Panc1 (cell line): ENCODE measurements at regions of chr6 and their contacts with region 1.

Region 1: GRCh38 chr6:74870403-74870802 is 335.4 kb downstream of the COL12A1 start:
- DNase-seq: no peak
- ATAC-seq: no peak
- H3K4me3 ChIP-seq: no peak overlapping the region
- H3K27ac ChIP-seq: no peak overlapping the region
- H3K4me1 ChIP-seq: no peaks in the 10 kb centered on the region
- H3K27me3 ChIP-seq: no peaks in the 10 kb centered on the region
- CTCF ChIP-seq: no peak

Region 2: DNA sequence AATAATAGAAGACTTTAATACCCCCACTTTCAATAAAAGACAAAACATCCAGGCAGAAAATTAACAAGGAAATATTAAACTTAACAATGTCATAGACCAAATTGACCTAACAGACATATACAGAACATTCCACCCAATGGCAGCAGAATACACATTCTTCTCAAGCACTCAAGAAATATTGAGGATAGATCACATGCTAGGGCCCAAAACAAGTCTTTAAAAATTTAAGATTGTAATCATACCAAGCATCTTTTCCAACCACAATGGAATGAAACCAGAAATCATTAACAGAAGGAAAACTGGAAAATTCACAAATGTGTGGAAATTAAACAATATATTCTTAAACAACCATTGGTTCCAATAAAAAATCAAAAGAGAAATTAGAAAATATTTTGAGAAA is 174.4 kb after region 1 on chr6:
- CTCF ChIA-PET with region 1: interaction called, 10 read pairs
- POLR2A ChIA-PET with region 1: no interaction called
- in situ Hi-C with region 1: no loop called
- intact Hi-C with region 1: no loop called
- DNase-seq: no peak
- ATAC-seq: no peak
- H3K4me3 ChIP-seq: no peak overlapping the region
- H3K27ac ChIP-seq: no peak overlapping the region
- H3K4me1 ChIP-seq: no peaks in the 10 kb centered on the region
- H3K27me3 ChIP-seq: no peaks in the 10 kb centered on the region
- CTCF ChIP-seq: no peak